ENCODE measurements at regions of chr12 and their contacts with region 1.

Region 1: GRCh38 chr12:47079468-47079980 is at the starts of genes AMIGO2 and PCED1B:
- DNase-seq: peak; percentile 82
- ATAC-seq: peak; percentile 70 to 79
- total RNA-seq, gene AMIGO2: 4.5 to 5.1 TPM
- total RNA-seq, gene PCED1B: 1.1 to 1.9 TPM

Region 2: GRCh38 chr12:47095446-47096236 is 16.1 kb after region 1 on chr12:
- intact Hi-C with region 1: no loop called
- DNase-seq: no peak
- ATAC-seq: no peak

Region 3: DNA sequence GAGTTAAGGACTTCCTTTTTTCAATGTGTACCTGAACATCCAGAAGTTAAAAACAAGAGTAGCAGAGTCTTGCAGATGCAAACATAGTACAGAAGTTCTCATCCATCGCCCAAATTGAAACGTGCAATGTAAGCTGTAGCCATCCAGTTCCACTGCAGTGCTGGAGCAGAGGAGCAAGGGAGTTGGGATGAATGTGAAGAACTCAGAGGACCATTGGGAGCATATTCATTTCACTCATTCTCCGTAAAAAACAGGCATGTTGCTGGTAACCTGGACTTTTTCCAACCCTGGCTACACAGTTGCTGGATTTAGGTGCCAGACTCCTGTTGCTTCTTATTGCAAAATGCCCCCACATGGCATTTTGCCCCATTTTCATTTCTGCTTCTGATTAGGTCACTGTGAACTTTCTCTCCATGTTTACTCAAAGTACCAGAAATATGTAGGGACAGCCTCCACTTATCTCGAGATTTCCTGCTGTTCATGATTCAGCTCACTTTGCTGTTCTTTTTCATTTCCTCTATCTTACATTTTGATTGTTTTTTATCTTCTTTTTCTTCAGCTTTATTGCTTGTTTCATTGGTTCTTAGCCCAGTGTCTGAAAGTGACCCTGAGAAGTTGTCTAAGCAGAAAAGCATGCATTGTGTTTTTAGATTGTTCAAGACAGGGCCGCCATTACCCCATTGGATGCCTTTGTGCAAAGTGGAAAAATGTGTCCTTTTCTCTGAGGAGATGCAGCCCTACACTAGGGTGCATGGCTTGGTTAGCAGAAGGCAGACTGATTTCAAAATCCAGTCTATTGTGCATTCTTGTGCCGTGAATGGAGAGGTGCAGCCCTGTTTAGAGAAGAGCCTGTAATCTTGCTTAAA is 109.3 kb after region 1 on chr12:
- intact Hi-C with region 1: no loop called
- DNase-seq: no peak
- ATAC-seq: peak in 1 of 2 donors; percentile 41

Region 4: DNA sequence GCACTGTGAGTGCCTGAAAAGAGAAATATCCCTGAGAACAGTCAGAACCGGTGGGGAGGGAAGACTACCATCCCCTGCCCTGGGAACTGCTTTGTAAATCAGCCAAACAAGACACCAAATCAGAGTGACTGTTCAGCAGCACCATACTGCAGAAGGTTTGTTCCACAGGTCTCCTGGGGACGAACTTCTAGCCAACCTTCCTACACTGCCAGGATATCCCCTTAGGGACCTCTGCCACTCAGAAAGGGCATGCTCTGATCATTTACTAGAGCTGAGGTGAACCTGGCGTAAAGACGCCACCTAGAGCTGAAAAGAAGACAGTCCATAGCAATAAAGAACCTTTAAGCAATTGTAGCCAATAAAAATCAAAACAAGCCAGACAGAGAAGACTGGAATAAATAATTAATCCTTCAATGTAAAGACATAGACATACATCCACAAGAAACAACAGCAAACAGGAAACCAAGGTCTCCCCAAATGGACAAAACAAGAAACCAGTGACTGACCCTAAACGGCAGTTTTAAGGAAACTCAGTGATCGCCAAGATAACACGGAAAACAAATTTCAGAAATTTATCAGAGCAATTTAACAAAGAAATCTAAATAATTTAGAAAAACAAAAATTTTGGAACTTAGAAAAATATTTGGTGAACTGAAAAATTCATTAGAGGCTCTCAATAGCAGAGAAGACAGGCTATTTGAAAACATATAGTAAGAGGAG is 228.3 kb after region 1 on chr12:
- intact Hi-C with region 1: loop called in 1 of 2 experiments (anchors 5 kb)
- DNase-seq: no peak
- ATAC-seq: peak; percentile 89 to 91

Region 5: DNA sequence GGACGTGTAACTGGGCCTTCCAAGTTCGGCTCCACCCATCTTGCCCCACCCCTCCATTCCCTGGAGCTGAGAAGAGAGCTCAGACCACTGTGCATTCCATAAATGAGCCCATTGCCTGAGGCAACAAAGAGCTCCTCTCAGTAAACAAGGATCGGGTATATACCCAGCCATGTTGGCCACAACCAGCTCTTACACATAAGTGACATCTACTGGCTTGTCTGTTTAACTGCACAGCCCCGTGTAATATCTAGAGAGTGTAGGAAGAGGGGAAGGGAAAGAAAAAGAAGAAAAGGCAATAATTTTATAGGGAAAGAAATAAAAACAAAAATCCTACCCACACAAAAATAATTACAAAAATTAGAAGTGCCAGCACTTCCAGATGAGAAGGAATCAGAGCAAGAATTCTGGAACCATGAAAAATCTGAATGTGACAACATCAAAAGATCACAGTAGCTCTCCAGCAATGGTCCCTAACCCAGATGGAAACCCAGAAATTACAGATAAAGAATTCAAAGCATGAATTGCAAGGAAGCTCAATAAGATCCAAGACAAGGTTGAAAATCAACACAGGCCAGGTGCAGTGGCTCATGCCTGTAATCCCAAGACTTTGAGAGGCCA is 318.2 kb after region 1 on chr12:
- intact Hi-C with region 1: loop called in 1 of 2 experiments (anchors 5 kb)
- DNase-seq: no peak
- ATAC-seq: peak; percentile 68 to 78